ENCODE measurements at regions of chr21 and their contacts with region 1.

Region 1: DNA sequence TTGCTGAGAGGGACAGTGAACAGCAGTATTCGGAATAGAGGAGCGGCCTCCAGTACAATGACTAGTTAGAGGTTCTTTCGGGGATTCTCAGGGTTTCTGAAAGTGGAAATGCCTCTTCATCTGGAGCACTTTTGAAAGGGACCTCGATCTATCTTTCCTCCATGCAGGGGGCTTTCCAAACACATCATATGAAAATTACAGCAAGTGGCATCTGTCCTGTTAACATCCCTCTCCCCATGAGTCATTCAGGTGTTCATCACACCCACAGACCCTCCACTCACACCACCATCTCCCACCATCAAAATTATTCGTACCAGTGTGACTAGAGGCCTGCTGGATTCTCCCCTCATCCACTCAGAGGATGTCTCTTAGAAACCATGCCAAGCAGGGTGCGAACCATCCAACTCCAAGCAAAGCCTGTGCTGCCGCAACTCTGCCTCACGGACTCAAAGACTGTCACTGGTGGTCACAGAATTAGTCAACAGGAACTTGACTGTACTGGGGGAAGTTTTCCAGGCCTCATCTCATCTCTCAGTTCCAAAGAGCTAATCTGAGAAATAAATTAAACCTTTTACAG is 211.1 kb downstream of the MRPL39 start:
- DNase-seq: peak; percentile 89
- ATAC-seq: peak; percentile 98
- H3K4me3 Mint-ChIP-seq: peak overlapping the region; percentile 54
- H3K27ac Mint-ChIP-seq: peak overlapping the region; percentile 93
- H3K4me1 Mint-ChIP-seq: peaks cover 31% of the 10 kb centered on the region
- H3K27me3 Mint-ChIP-seq: no peaks in the 10 kb centered on the region

Region 2: GRCh38 chr21:25329227-25329825 is 66.9 kb before region 1 on chr21:
- CTCF ChIA-PET with region 1: no interaction called
- POLR2A ChIA-PET with region 1: no interaction called
- intact Hi-C with region 1: no loop called
- DNase-seq: no peak
- ATAC-seq: no peak
- H3K4me3 Mint-ChIP-seq: no peak overlapping the region
- H3K27ac Mint-ChIP-seq: no peak overlapping the region
- H3K4me1 Mint-ChIP-seq: no peaks in the 10 kb centered on the region
- H3K27me3 Mint-ChIP-seq: peaks cover 4% of the 10 kb centered on the region

Region 3: GRCh38 chr21:25428537-25428936 is 32.3 kb after region 1 on chr21:
- CTCF ChIA-PET with region 1: interaction called, 3 read pairs
- POLR2A ChIA-PET with region 1: no interaction called
- intact Hi-C with region 1: loop called in 1 of 2 experiments (anchors 2 kb)
- DNase-seq: no peak
- ATAC-seq: peak; percentile 93
- H3K4me3 Mint-ChIP-seq: peak overlapping the region; percentile 32
- H3K27ac Mint-ChIP-seq: peak overlapping the region; percentile 45
- H3K4me1 Mint-ChIP-seq: peaks cover 52% of the 10 kb centered on the region
- H3K27me3 Mint-ChIP-seq: no peaks in the 10 kb centered on the region

Region 4: GRCh38 chr21:25464275-25464674 is 68.1 kb after region 1 on chr21:
- CTCF ChIA-PET with region 1: no interaction called
- POLR2A ChIA-PET with region 1: no interaction called
- intact Hi-C with region 1: loop called in 1 of 2 experiments (anchors 1 kb)
- DNase-seq: peak; percentile 43
- ATAC-seq: peak; percentile 77
- H3K4me3 Mint-ChIP-seq: peak overlapping the region; percentile 45
- H3K27ac Mint-ChIP-seq: peak overlapping the region; percentile 95
- H3K4me1 Mint-ChIP-seq: peaks cover 77% of the 10 kb centered on the region
- H3K27me3 Mint-ChIP-seq: no peaks in the 10 kb centered on the region

Region 5: DNA sequence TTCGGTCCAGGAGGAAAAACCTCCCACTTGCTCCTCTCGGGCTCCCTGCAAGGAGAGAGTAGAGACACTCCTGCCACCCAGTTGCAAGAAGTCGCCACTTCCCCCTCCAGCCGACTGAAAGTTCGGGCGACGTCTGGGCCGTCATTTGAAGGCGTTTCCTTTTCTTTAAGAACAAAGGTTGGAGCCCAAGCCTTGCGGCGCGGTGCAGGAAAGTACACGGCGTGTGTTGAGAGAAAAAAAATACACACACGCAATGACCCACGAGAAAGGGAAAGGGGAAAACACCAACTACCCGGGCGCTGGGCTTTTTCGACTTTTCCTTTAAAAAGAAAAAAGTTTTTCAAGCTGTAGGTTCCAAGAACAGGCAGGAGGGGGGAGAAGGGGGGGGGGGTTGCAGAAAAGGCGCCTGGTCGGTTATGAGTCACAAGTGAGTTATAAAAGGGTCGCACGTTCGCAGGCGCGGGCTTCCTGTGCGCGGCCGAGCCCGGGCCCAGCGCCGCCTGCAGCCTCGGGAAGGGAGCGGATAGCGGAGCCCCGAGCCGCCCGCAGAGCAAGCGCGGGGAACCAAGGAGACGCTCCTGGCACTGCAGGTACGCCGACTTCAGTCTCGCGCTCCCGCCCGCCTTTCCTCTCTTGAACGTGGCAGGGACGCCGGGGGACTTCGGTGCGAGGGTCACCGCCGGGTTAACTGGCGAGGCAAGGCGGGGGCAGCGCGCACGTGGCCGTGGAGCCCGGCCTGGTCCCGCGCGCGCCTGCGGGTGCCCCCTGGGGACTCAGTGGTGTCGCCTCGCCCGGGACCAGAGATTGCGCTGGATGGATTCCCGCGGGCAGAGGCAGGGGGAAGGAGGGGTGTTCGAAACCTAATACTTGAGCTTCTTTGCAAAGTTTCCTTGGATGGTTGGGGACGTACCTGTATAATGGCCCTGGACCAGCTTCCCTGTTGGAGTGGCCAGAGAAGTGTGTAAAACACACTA is 165.7 kb after region 1 on chr21:
- CTCF ChIA-PET with region 1: no interaction called
- POLR2A ChIA-PET with region 1: interaction called, 5 read pairs
- intact Hi-C with region 1: loop called in 1 of 2 experiments (anchors 2 kb)
- DNase-seq: peak; percentile 90
- ATAC-seq: peak; percentile 69
- H3K4me3 Mint-ChIP-seq: peak overlapping the region; percentile 93
- H3K27ac Mint-ChIP-seq: peak overlapping the region; percentile 100
- H3K4me1 Mint-ChIP-seq: peaks cover 43% of the 10 kb centered on the region
- H3K27me3 Mint-ChIP-seq: no peaks in the 10 kb centered on the region

Region 6: GRCh38 chr21:25734904-25735645 is 338.9 kb after region 1 on chr21 and contains the starts of genes ATP5PF and GABPA:
- CTCF ChIA-PET with region 1: no interaction called
- POLR2A ChIA-PET with region 1: no interaction called
- intact Hi-C with region 1: loop called in 1 of 2 experiments (anchors 1 kb)
- DNase-seq: peak; percentile 99
- ATAC-seq: peak; percentile 94
- H3K4me3 Mint-ChIP-seq: peak within 1 kb of the TSS; percentile 98
- H3K27ac Mint-ChIP-seq: peak within 1 kb of the TSS; percentile 100
- H3K4me1 Mint-ChIP-seq: peaks cover 48% of the 10 kb centered on the region
- H3K27me3 Mint-ChIP-seq: no peaks in the 10 kb centered on the region
- total RNA-seq, gene ATP5PF: 154 to 165 TPM
- total RNA-seq, gene GABPA: 18.7 to 25.3 TPM

Measured in activated CD4-positive, alpha-beta T cell treated with anti-CD3 and anti-CD28 coated beads for 36 hours (primary cell).